ENCODE measurements at regions of chr6 and their contacts with region 1.

Region 1: GRCh38 chr6:96542702-96543101 is 20.2 kb upstream of the FHL5 start:
- DNase-seq: no peak
- ATAC-seq: no peak
- H3K4me3 ChIP-seq: no peak overlapping the region
- H3K27ac ChIP-seq: no peak overlapping the region
- H3K4me1 ChIP-seq: no peaks in the 10 kb centered on the region
- H3K27me3 ChIP-seq: no peaks in the 10 kb centered on the region
- CTCF ChIP-seq: peak in 8 of 9 donors; percentile 8 to 55 (median 33)

Region 2: GRCh38 chr6:96499781-96500180 is 42.9 kb before region 1 on chr6:
- intact Hi-C with region 1: no loop called
- DNase-seq: no peak
- ATAC-seq: no peak
- H3K4me3 ChIP-seq: no peak overlapping the region
- H3K27ac ChIP-seq: no peak overlapping the region
- H3K4me1 ChIP-seq: no peaks in the 10 kb centered on the region
- H3K27me3 ChIP-seq: no peaks in the 10 kb centered on the region
- CTCF ChIP-seq: no peak

Region 3: DNA sequence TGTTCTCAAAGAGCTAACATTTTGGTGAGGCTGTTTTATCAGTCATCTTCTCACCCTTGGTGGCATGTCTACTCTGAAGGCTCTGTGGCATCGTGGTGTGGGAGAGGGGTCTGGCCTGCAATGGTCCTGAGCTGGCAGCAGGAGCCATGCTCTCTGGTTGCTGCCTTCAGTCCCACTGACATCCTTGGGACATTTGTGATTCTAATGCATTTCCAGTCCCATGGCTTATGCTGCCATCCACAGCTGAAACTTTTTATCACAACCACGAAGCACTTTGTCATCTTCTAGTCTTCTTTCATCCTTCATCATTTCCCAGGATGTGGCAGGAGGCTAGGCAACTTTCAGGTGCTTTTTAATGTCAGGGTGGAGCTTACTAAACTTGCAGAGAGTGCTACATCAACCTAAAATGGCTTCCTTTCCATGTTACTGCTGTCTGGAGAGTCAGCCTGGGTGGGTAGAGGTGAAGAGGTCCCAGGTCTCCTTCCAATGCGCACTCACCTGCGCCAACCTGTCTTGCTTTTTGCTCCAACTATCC is 217.5 kb after region 1 on chr6:
- intact Hi-C with region 1: loop called in 2 of 10 experiments (anchors 5 to 10 kb)
- DNase-seq: no peak
- ATAC-seq: no peak
- H3K4me3 ChIP-seq: no peak overlapping the region
- H3K27ac ChIP-seq: no peak overlapping the region
- H3K4me1 ChIP-seq: no peaks in the 10 kb centered on the region
- H3K27me3 ChIP-seq: peaks cover 0 to 5% (median 0%) of the 10 kb centered on the region in 7 donors
- CTCF ChIP-seq: peak in 4 of 9 donors; percentile 6 to 25 (median 20)

Region 4: DNA sequence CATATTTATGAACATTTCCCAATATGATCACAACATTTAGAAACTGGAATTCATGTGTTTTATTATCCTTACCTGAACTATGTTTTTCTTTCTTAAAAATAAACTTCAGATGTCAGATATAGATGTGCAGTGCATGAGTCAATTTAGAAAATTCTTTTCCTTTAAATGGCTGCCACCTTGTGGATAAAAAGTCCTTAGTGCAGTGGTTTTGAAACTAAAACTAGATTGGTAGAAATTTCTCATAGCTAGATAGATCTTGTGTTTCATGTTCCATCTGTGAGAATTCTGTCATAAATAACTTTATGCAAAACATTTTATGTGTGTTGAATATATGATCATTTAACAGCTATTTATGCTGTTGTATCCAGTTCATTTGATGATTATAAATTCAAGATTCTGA is 516.8 kb after region 1 on chr6:
- intact Hi-C with region 1: loop called in 1 of 10 experiments (anchors 10 kb)
- DNase-seq: no peak
- ATAC-seq: peak in 1 of 8 donors; percentile 33
- H3K4me3 ChIP-seq: no peak overlapping the region
- H3K27ac ChIP-seq: no peak overlapping the region
- H3K4me1 ChIP-seq: no peaks in the 10 kb centered on the region
- H3K27me3 ChIP-seq: peaks cover 0 to 3% (median 0%) of the 10 kb centered on the region in 7 donors
- CTCF ChIP-seq: peak; percentile 20 to 70 (median 61)

Measured in heart right ventricle (tissue), 16 donors.